ENCODE measurements at regions of chr21 and their contacts with region 1.

Region 1: DNA sequence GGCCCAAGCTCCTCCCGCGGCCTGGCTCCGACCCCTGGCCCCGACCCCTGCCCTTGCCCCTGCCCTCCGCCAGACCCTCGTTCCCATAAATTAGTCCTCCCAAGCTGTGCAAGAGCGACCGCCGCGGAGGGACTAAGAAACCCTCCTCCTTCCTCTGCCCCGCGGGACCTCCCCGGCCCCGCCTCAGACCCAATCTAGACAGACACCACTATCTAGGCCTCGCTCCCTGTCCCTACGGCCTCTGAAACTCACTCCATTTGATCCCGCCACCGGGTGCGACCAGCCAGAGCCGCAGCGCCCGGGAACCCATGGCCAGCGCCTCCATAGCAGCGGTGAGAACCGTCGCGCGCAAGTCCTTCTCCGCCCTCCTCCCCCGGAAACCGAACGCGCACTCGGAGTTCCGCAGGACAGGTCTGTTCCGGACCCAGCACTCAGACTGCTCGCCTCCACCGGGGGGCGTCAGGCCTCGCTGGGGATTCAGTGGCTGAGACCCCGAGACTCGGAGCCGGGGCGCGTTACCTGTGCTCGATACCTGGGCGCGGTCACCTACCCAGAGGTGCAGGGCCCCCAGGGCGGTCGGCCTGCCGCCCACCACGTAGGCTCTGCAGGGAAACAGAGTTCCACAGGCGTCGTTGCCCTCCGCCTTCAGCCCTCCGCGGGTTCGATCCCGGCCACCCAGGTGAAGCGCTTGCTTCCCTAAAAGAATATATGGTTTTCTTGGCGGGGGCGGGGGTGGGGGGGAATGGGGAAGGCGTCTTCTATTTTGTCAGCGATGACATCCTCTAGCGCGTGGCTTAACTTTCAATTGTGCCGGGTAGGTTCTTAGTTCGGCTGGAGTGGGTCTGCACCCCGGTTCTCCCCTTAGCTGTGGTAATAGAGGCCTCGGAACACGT is at the start of gene MRPL39:
- DNase-seq: peak; percentile 95
- ATAC-seq: peak; percentile 95
- H3K4me3 Mint-ChIP-seq: peak within 1 kb of the TSS; percentile 97
- H3K27ac Mint-ChIP-seq: peak within 1 kb of the TSS; percentile 100
- H3K4me1 Mint-ChIP-seq: peaks cover 37% of the 10 kb centered on the region
- H3K27me3 Mint-ChIP-seq: no peaks in the 10 kb centered on the region
- total RNA-seq, gene MRPL39: 78.4 to 84.5 TPM

Region 2: GRCh38 chr21:25329227-25329825 is 278.1 kb before region 1 on chr21:
- CTCF ChIA-PET with region 1: no interaction called
- POLR2A ChIA-PET with region 1: no interaction called
- intact Hi-C with region 1: no loop called
- DNase-seq: no peak
- ATAC-seq: no peak
- H3K4me3 Mint-ChIP-seq: no peak overlapping the region
- H3K27ac Mint-ChIP-seq: no peak overlapping the region
- H3K4me1 Mint-ChIP-seq: no peaks in the 10 kb centered on the region
- H3K27me3 Mint-ChIP-seq: peaks cover 4% of the 10 kb centered on the region

Region 3: DNA sequence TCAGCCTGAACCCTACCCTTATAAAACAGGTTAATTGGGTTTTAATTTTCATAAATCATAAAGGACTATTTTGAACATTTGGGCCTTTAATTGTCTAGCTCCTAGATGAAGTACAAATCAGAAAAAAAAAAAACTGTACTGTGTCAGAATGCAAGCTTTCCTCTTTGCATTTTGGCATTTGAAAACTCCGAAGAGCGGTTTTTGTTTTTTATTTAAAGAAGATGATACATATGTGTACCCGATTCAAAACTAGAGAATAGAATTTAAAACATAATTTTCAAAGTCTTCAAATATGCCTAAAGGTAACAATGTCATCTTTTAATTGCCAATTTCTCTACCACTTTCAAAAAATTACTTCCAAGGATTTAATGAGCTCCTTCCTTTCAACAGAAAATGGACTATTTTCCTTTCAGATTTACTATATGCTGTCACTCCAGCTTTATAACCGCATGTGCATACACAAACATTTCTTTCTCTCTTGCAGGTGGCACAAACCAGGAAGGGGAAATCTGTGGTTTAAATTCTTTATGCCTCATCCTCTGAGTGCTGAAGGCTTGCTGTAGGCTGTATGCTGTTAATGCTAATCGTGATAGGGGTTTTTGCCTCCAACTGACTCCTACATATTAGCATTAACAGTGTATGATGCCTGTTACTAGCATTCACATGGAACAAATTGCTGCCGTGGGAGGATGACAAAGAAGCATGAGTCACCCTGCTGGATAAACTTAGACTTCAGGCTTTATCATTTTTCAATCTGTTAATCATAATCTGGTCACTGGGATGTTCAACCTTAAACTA is 33.8 kb before region 1 on chr21:
- CTCF ChIA-PET with region 1: interaction called, 4 read pairs
- POLR2A ChIA-PET with region 1: no interaction called
- intact Hi-C with region 1: loop called in 1 of 2 experiments (anchors 2 kb)
- DNase-seq: peak; percentile 83
- ATAC-seq: peak; percentile 34
- H3K4me3 Mint-ChIP-seq: peak overlapping the region; percentile 93
- H3K27ac Mint-ChIP-seq: peak overlapping the region; percentile 96
- H3K4me1 Mint-ChIP-seq: peaks cover 72% of the 10 kb centered on the region
- H3K27me3 Mint-ChIP-seq: no peaks in the 10 kb centered on the region

Region 4: GRCh38 chr21:25700741-25701140 is 93.3 kb after region 1 on chr21:
- CTCF ChIA-PET with region 1: interaction called, 47 read pairs
- POLR2A ChIA-PET with region 1: no interaction called
- intact Hi-C with region 1: no loop called
- DNase-seq: no peak
- ATAC-seq: no peak
- H3K4me3 Mint-ChIP-seq: no peak overlapping the region
- H3K27ac Mint-ChIP-seq: no peak overlapping the region
- H3K4me1 Mint-ChIP-seq: no peaks in the 10 kb centered on the region
- H3K27me3 Mint-ChIP-seq: no peaks in the 10 kb centered on the region

Region 5: GRCh38 chr21:25734904-25735645 is 127.7 kb after region 1 on chr21 and contains the starts of genes ATP5PF and GABPA:
- CTCF ChIA-PET with region 1: interaction called, 8 read pairs
- POLR2A ChIA-PET with region 1: no interaction called
- intact Hi-C with region 1: loop called (anchors 1 kb)
- DNase-seq: peak; percentile 99
- ATAC-seq: peak; percentile 94
- H3K4me3 Mint-ChIP-seq: peak within 1 kb of the TSS; percentile 98
- H3K27ac Mint-ChIP-seq: peak within 1 kb of the TSS; percentile 100
- H3K4me1 Mint-ChIP-seq: peaks cover 48% of the 10 kb centered on the region
- H3K27me3 Mint-ChIP-seq: no peaks in the 10 kb centered on the region
- total RNA-seq, gene ATP5PF: 154 to 165 TPM
- total RNA-seq, gene GABPA: 18.7 to 25.3 TPM

Region 6: GRCh38 chr21:25862596-25862995 is 255.2 kb after region 1 on chr21:
- CTCF ChIA-PET with region 1: interaction called, 11 read pairs
- POLR2A ChIA-PET with region 1: no interaction called
- intact Hi-C with region 1: loop called (anchors 1 kb)
- DNase-seq: peak; percentile 41
- ATAC-seq: peak; percentile 53
- H3K4me3 Mint-ChIP-seq: no peak overlapping the region
- H3K27ac Mint-ChIP-seq: no peak overlapping the region
- H3K4me1 Mint-ChIP-seq: no peaks in the 10 kb centered on the region
- H3K27me3 Mint-ChIP-seq: no peaks in the 10 kb centered on the region